ENCODE measurements at regions of chr6 and their contacts with region 1.

Region 1: DNA sequence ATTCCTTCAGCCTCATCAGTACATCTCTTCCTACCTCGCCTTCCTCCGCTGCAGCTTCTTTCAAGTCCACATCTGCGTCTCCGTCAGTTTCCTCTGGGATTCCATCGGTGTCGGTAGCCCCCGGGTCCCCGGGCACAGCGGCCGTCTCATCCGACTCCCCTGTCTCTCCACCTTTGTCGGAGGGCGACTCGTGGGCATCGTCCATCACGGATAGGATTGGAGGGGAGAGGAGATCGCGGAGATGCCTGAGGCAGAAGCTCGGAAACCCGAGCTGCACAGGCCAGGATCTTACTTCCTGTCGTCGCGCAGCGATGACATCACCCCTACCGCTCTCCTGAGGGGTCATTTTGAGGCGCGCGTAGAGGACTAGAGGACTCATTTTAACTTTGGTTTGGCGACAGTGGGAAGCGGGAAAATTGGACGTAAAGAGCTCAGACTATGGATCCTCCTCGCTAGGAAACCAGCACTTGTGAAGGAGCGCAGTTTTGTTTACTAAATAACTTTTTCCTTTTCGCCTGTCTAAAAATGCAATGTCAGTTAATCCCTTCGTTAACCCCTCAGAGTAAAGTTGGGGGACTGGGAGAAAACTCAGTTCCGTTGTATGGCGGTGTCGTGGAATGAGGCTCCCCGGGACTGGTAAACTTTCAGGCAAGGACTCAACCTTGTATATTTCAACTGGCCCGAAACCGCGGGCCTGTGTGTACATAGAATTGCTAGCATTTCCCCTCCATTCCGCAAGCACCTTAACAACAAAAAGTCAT is at the start of gene TAF11:
- DNase-seq: peak; percentile 73 to 91 (median 88)
- ATAC-seq: peak; percentile 80
- H3K4me3 ChIP-seq: peak within 1 kb of the TSS; percentile 94
- H3K4me3 Mint-ChIP-seq: peak within 1 kb of the TSS; percentile 92 to 100 (median 100)
- H3K27ac ChIP-seq: peak within 1 kb of the TSS; percentile 95
- H3K27ac Mint-ChIP-seq: peak within 1 kb of the TSS; percentile 99 to 100 (median 100)
- H3K4me1 ChIP-seq: peaks cover 15 to 18% of the 10 kb centered on the region in 2 donors
- H3K4me1 Mint-ChIP-seq: peaks cover 41 to 71% (median 58%) of the 10 kb centered on the region in 7 donors
- H3K27me3 ChIP-seq: no peaks in the 10 kb centered on the region
- H3K27me3 Mint-ChIP-seq: peaks cover 0 to 16% (median 0%) of the 10 kb centered on the region in 5 donors
- total RNA-seq, gene TAF11: 25.4 to 35.1 (median 29.4) TPM

Region 2: DNA sequence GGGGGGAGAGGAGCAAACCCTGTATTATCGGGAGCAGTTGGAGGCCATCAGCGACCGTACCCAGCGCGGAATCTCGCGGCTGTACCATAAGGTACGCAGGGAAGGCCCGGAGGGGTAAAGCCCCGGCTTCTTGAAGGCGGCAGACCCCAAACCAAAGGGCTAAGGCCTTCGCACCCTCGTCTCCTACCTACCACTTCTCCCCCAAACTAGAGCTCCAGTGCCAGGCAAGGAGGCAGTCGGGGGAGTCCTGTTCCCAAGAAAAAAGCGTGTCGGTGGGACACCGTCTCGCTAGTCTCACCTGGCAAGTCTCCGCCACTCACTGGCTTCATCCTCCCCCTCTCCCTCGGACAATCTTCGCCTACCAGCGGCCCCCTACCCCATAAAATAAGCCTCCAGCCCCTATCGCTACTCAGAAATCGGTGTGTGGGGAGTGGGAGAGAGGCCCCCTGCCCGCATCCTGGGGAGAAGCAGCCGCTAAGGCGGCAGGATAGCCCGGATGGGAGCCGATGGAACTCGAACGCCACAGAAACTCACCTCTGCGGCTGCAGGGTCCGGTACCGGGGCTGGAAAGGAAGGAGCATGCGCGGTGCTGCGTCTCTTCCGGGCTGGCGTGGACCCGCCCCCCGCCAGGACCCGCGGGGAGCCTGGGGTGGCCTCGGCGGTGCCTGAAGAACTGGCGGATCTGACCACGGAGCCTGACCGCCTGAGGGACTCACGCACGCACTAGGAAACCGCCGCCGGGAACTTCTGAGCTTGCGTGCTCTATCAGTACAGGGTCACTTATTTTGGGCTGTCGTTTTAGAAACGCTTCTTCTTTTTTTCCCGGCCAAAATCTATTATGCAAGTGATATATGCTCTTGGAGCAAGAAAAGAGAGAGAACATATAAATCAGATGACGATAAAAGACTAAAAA is 462.2 kb before region 1 on chr6 and contains the start of gene RPS10:
- CTCF ChIA-PET with region 1: no interaction called
- POLR2A ChIA-PET with region 1: no interaction called
- intact Hi-C with region 1: loop called in 1 of 2 experiments (anchors 2 kb)
- DNase-seq: peak; percentile 80 to 94 (median 88)
- ATAC-seq: peak; percentile 100
- H3K4me3 ChIP-seq: peak within 1 kb of the TSS; percentile 98
- H3K4me3 Mint-ChIP-seq: peak within 1 kb of the TSS; percentile 93 to 99 (median 97)
- H3K27ac ChIP-seq: peak within 1 kb of the TSS; percentile 93
- H3K27ac Mint-ChIP-seq: peak within 1 kb of the TSS; percentile 95 to 99 (median 98)
- H3K4me1 ChIP-seq: peaks cover 7 to 18% of the 10 kb centered on the region in 2 donors
- H3K4me1 Mint-ChIP-seq: peaks cover 13 to 43% (median 31%) of the 10 kb centered on the region in 7 donors
- H3K27me3 ChIP-seq: no peaks in the 10 kb centered on the region
- H3K27me3 Mint-ChIP-seq: peaks cover 0 to 3% (median 0%) of the 10 kb centered on the region in 5 donors
- total RNA-seq, gene RPS10: 1,466 to 3,151 (median 2,905) TPM

Region 3: GRCh38 chr6:34696739-34697543 is 191.0 kb before region 1 on chr6 and contains the start of gene ILRUN:
- CTCF ChIA-PET with region 1: no interaction called
- POLR2A ChIA-PET with region 1: interaction called, 4 read pairs
- intact Hi-C with region 1: loop called (anchors 1 to 2 kb)
- DNase-seq: peak; percentile 88 to 97 (median 93)
- ATAC-seq: peak; percentile 96
- H3K4me3 ChIP-seq: peak within 1 kb of the TSS; percentile 88
- H3K4me3 Mint-ChIP-seq: peak within 1 kb of the TSS; percentile 95 to 99 (median 98)
- H3K27ac ChIP-seq: peak within 1 kb of the TSS; percentile 94
- H3K27ac Mint-ChIP-seq: peak within 1 kb of the TSS; percentile 88 to 100 (median 99)
- H3K4me1 ChIP-seq: peaks cover 17 to 20% of the 10 kb centered on the region in 2 donors
- H3K4me1 Mint-ChIP-seq: peaks cover 30 to 60% (median 51%) of the 10 kb centered on the region in 7 donors
- H3K27me3 ChIP-seq: no peaks in the 10 kb centered on the region
- H3K27me3 Mint-ChIP-seq: peaks cover 0 to 4% (median 0%) of the 10 kb centered on the region in 5 donors
- total RNA-seq, gene ILRUN: 45.2 to 74.6 (median 53.7) TPM

Region 4: DNA sequence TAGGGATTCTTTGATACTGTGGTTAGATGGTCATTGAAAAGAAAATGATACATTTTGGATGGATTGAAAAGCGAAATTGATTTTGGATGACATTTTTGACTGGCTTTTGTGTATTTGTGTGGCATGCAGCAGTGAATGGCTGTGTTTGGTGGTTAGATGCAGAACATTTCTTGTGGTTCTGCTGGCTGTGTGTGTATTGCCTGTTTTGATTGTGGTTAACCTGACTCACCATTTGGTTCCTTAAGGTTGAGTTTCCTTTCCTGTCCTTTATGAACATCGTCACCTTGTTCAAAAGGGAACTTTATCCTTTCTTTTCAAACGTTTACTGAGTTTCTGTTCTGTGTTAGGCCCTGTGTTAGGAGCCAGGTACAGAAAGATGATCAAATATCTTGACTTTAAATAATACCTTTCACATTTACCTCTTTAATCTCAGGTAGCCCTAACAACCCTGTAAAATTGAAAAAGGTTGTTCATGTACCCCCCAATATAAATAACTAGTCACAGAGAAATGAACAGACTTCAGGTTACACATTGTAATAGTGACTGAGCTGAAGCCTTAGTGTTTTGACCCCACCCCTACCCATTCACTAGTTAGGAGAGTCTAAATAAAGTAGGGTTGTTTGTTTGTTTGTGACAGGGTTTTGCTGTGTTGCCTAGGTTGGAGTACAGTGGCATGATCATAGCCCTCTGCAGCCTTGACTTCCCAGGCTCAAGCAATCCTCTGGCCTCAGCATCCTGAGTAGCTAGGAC is 25.0 kb after region 1 on chr6:
- CTCF ChIA-PET with region 1: no interaction called
- POLR2A ChIA-PET with region 1: interaction called, 4 read pairs
- intact Hi-C with region 1: loop called (anchors 1 to 2 kb)
- DNase-seq: peak in 8 of 9 donors; percentile 39 to 65 (median 52)
- ATAC-seq: peak; percentile 82
- H3K4me3 ChIP-seq: no peak overlapping the region
- H3K4me3 Mint-ChIP-seq: peak overlapping the region; percentile 10 to 83 (median 68)
- H3K27ac ChIP-seq: no peak overlapping the region
- H3K27ac Mint-ChIP-seq: peak overlapping the region; percentile 4 to 85 (median 53)
- H3K4me1 ChIP-seq: peaks cover 16 to 17% of the 10 kb centered on the region in 2 donors
- H3K4me1 Mint-ChIP-seq: peaks cover 28 to 48% (median 32%) of the 10 kb centered on the region in 7 donors
- H3K27me3 ChIP-seq: no peaks in the 10 kb centered on the region
- H3K27me3 Mint-ChIP-seq: peaks cover 0 to 52% (median 0%) of the 10 kb centered on the region in 5 donors

Region 5: DNA sequence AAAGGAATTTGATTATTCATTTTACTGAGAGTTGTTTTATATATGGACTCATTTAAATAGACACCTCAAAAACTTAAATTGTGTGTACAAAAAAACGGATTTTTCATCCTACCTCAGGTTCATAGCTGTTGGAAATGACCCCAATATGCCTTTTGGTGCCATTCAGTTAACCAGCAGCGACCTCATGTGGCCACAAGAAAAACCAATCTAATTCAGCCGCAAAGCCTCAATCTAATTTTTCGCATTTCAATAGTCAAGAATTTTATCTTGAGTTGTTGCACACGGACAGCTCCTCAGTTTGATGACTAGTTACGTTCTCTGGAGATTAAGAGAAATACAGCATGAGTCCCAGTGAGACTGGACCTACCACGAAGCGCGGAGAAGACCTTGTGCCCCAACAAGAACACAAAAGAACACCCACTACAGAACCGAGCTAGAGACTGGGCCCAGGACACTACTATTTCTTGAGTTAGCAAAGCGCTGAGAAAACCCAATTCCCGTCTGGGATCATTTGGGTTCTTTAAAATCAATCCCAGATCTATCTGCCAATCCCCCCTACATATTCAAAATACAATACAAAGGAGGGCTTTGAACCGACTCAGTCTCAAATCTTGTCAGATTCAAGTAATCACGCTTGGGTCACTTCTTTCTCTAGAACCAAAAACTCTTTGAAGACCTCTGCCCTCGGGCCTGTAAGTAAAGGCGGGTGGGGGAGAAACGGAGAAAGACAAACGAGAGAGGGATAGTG is 252.1 kb after region 1 on chr6:
- CTCF ChIA-PET with region 1: no interaction called
- POLR2A ChIA-PET with region 1: no interaction called
- intact Hi-C with region 1: loop called in 1 of 2 experiments (anchors 1 kb)
- DNase-seq: peak in 6 of 9 donors; percentile 26 to 50 (median 42)
- ATAC-seq: peak; percentile 46
- H3K4me3 ChIP-seq: no peak overlapping the region
- H3K4me3 Mint-ChIP-seq: peak overlapping the region in 9 of 10 donors; percentile 1 to 76 (median 46)
- H3K27ac ChIP-seq: no peak overlapping the region
- H3K27ac Mint-ChIP-seq: peak overlapping the region in 2 of 9 donors; percentile 38 to 44
- H3K4me1 ChIP-seq: no peaks in the 10 kb centered on the region
- H3K4me1 Mint-ChIP-seq: peaks cover 13 to 22% (median 16%) of the 10 kb centered on the region in 7 donors
- H3K27me3 ChIP-seq: no peaks in the 10 kb centered on the region
- H3K27me3 Mint-ChIP-seq: peaks cover 8 to 35% (median 13%) of the 10 kb centered on the region in 5 donors